K562 (cell line): ENCODE measurements at regions of chr12 and their contacts with region 1.

Region 1: GRCh38 chr12:53984901-53985709 is at the start of gene HOXC10:
- DNase-seq: peak; percentile 91 to 97 (median 92)
- ATAC-seq: peak; percentile 80
- H3K4me3 ChIP-seq: no peak within 1 kb of the TSS; the same call in 1 of the 2 replicates
- H3K27ac ChIP-seq: no peak within 1 kb of the TSS
- H3K4me1 ChIP-seq: peaks cover 29 to 43% of the 10 kb centered on the region in 2 experiments
- H3K27me3 ChIP-seq: peaks cover 18 to 21% of the 10 kb centered on the region in 2 experiments
- CTCF ChIP-seq: peak; percentile 82 to 95 (median 95)
- EP300 ChIP-seq: 0 out of 2 replicates have a peak, but pooled peaks have one; percentile 17
- POLR2A ChIP-seq: no peak
- RAD21 ChIP-seq: peak; percentile 88 to 91
- polyA plus RNA-seq, gene HOXC10: 0.25 to 0.42 TPM

Region 2: GRCh38 chr12:53999559-54000104 is 14.5 kb after region 1 on chr12:
- CTCF ChIA-PET with region 1: interaction called, 26 read pairs
- POLR2A ChIA-PET with region 1: interaction called, 43 read pairs
- in situ Hi-C with region 1: no loop called
- intact Hi-C with region 1: loop called (anchors 2 kb)
- DNase-seq: peak; percentile 77 to 91 (median 82)
- ATAC-seq: peak; percentile 23
- H3K4me3 ChIP-seq: peak overlapping the region; percentile 71
- H3K27ac ChIP-seq: peak overlapping the region; percentile 94
- H3K4me1 ChIP-seq: peaks cover 38 to 78% of the 10 kb centered on the region in 2 experiments
- H3K27me3 ChIP-seq: no peaks in the 10 kb centered on the region
- CTCF ChIP-seq: no peak
- EP300 ChIP-seq: no peak
- POLR2A ChIP-seq: no peak
- RAD21 ChIP-seq: no peak

Region 3: DNA sequence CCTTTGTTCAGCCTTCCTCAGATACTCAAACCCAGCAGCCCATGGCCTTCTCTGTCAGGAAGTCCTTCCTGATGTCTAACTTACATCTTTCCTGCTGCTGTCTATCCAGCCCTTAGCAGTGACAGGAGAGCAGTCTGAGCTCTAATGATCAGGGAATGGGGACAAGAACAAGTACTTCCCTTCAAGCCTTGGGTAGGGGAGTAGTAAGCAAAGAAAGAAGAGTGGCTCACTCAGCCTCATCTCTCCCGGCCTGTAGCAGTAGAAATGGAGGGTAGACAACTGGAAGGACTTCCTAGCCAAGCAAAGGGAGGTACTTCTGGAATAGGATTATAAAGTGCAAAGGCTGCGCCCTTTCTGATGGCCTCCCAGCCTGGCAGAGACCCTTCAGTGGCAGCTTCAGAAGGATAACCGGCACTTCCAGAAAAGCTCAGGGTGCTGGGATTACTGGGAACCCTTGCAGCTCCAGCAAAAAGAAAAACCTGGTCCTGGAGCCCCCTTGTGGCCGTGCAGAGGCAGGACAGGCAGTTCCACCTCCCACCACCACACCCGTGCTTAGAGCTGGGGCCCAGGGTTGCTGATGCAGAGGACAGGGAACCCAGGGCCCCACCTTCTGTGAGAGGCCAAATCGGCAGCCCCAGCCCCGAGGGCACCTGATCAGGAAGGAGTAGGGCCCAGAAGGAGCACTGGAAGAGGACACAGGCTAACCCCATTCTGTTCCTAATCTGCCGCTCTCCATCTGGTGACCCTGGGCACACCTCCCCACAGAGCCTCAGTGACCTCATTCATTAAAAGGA is 216.1 kb after region 1 on chr12:
- CTCF ChIA-PET with region 1: interaction called, 10 read pairs
- POLR2A ChIA-PET with region 1: interaction called, 3 read pairs
- in situ Hi-C with region 1: loop called (anchors 5 kb)
- intact Hi-C with region 1: loop called (anchors 1 kb)
- DNase-seq: peak; percentile 82 to 86 (median 84)
- ATAC-seq: peak; percentile 92
- H3K4me3 ChIP-seq: no peak overlapping the region
- H3K27ac ChIP-seq: no peak overlapping the region
- H3K4me1 ChIP-seq: peaks cover 28 to 31% of the 10 kb centered on the region in 2 experiments
- H3K27me3 ChIP-seq: peaks cover 2 to 5% of the 10 kb centered on the region in 2 experiments; a peak in 2 of 5 replicates
- CTCF ChIP-seq: peak; percentile 98 to 99 (median 98)
- EP300 ChIP-seq: no peak
- POLR2A ChIP-seq: no peak
- RAD21 ChIP-seq: peak; percentile 77 to 87

Region 4: GRCh38 chr12:54214553-54215406 is 229.7 kb after region 1 on chr12:
- CTCF ChIA-PET with region 1: interaction called, 22 read pairs
- POLR2A ChIA-PET with region 1: interaction called, 3 read pairs
- in situ Hi-C with region 1: no loop called
- intact Hi-C with region 1: no loop called
- DNase-seq: peak; percentile 88 to 95 (median 94)
- ATAC-seq: peak; percentile 91
- H3K4me3 ChIP-seq: peak overlapping the region; percentile 44
- H3K27ac ChIP-seq: peak overlapping the region; percentile 50; the same call in 2 of the 3 replicates
- H3K4me1 ChIP-seq: peaks cover 25 to 48% of the 10 kb centered on the region in 2 experiments
- H3K27me3 ChIP-seq: no peaks in the 10 kb centered on the region
- CTCF ChIP-seq: peak; percentile 99 to 100 (median 99)
- EP300 ChIP-seq: peak; percentile 40; the same call in 1 of the 2 replicates
- POLR2A ChIP-seq: peak; percentile 47; the same call in 1 of the 2 replicates
- RAD21 ChIP-seq: peak; percentile 70 to 81